ENCODE measurements at regions of chr1 and their contacts with region 1.

Region 1: DNA sequence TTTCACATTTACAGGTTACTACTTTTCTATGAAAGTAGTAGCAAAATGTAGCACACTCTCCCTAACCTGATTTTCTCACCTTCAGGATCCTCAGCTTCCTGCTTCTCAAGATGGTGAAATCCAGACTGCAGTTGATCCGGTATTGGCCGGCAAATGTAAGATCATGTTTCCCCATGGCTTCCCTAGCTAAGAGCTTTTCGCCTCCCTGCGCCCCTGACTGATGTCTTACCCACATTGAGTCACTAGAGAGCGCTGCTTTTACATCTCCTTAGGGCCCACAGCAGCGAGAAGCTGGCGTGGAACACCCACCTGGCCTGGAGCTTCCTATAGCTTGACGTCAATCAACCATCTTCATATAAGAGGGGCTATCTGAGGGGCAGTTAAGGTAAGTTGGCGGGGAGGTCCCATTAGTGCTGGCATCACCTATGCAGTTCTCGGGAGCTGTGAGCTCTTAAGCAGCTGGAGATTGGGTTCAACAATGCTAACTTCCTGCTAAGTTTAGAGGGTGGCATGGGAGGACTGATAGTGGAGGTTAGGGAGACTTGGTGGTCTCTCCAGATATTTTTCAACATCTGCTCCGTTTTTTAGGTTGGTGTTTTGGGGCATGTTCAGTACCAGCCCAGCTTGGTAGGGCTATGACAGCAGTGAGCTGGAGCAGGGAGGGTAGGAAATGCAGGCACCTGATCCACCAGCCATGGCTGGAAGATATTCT is 5.5 kb downstream of the PTPN7 start:
- DNase-seq: peak; percentile 53
- CTCF ChIP-seq: peak; percentile 65

Region 2: DNA sequence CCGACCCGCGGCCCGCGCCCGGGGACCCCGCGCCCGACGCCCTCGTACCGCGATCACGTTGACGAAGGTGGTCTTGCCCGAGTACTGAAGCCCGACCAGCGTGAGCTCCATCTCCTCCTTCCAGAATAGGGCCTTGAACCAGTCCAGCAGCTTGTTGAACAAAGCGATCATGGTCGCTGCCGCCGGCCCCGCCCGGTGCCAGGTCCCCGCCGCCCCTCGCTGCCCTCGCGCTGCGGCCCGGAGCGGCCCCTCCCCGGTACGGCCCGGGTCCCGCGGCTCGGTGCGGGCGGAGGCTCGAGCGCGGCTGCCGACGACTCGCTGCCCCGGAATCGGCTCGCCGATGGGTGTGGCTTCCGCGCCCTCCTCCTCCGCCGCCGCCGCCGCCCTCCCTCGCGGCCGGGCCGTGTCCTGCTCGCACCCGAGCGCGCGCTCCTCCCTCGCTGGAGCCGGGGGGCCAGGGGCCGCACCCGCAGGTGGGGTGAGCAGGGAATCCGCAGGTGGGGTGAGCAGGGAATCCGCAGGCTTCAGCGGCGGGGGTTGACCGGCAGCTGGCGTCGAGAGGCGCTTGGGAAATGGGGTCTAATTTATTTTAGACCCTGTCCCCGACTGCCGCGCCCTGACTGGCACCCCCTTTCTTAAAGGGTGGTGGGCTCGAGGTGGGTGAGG is 10.4 kb before region 1 on chr1 and contains the start of gene ARL8A:
- CTCF ChIA-PET with region 1: interaction called, 15 read pairs
- POLR2A ChIA-PET with region 1: interaction called, 3 read pairs
- DNase-seq: peak; percentile 87
- CTCF ChIP-seq: no peak

Region 3: DNA sequence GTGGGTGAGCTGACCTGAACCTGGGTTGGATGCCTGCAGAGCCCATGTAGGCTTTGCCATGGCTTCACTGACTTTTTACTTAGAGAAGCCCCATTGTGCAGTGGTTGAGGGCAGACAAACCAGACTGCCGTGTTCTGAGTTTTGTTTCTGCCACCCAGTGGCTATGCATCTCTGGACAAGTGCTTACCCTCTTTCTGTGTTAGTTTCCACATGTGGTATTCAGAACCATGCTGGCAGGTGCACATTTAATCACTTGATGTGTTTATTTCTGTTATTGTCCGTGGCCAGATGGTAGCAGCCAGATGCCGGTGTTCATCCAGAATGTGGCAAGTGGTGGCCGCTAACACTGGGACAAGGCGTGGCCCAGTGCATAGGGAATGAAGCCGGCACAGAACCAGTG is 15.8 kb after region 1 on chr1:
- CTCF ChIA-PET with region 1: interaction called, 14 read pairs
- POLR2A ChIA-PET with region 1: no interaction called
- DNase-seq: no peak
- CTCF ChIP-seq: no peak